ENCODE measurements at regions of chrX and their contacts with region 1.

Region 1: DNA sequence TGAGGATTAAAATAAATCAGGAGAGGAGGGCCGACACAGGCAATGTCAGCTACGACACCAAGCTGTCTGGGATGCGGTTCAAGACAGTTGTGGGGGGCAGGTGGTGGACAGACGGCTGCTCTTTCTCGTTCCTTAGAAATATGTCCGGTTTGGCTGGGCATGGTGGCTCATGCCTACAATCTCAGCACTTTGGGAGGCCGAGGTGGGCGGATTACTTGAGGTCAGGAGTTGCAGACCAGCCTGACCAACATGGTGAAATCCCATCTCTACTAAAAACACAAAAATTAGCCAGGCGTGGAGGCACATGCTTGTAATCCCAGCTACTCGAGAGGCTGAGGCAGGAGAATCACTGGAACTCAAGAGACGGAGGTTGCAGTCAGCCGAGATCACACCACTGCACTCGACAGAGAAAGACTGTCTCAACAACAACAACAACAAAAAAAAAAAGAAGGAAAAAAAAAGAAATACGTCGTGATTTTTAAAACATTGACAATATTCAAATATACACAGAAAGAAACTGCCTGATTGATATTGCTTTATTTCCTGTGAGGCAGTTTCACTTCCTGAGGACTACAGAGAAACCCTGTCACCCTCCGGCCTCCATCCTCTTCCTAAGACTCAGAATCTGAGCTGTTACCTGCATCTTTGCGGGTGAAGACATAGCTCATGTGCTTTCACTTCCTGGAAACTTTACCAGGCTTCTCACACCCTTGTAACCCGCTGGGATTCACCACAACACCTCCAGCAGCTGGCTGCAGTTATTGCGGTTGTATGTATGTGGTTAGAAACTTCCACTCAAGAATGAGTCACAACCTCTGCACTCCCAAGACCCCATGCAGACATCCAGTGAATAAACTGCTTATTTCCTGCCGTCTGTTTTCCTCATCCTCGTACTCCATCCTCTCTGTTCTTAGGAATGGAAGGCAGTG is 63.8 kb upstream of the STS start:
- DNase-seq: peak in 12 of 14 experiments; percentile 14 to 81 (median 50)
- ATAC-seq: peak; percentile 91
- H3K4me3 ChIP-seq: no peak overlapping the region
- H3K4me3 Mint-ChIP-seq: peak overlapping the region; percentile 72
- H3K27ac ChIP-seq: peak overlapping the region in 1 of 2 donors; percentile 46
- H3K27ac Mint-ChIP-seq: peak overlapping the region; percentile 77
- H3K4me1 ChIP-seq: peaks cover 33% of the 10 kb centered on the region
- H3K4me1 Mint-ChIP-seq: peaks cover 56% of the 10 kb centered on the region
- H3K27me3 ChIP-seq: no peaks in the 10 kb centered on the region
- H3K27me3 Mint-ChIP-seq: no peaks in the 10 kb centered on the region
- CTCF ChIP-seq: no peak

Region 2: DNA sequence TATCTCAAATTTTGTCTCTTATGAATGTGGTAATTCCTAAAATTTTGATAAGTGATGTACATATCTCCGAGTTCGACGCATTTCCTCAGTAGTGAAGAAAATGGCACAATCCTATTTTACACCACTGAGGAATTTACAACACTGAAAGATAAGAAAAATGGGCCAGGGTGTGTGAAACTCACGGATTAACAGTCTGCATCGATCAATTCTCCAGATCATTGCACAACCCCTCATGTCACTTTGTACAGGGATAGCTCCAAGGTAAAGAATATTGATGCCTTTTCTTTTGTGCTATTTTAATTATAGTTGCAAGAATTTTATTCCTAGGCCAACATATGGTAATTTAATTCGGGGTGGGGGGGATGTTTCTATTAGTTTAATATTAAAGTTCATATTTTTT is 280.1 kb before region 1 on chrX:
- CTCF ChIA-PET with region 1: no interaction called
- POLR2A ChIA-PET with region 1: no interaction called
- intact Hi-C with region 1: loop called in 1 of 2 experiments (anchors 5 kb)
- DNase-seq: no peak
- ATAC-seq: no peak
- H3K4me3 ChIP-seq: no peak overlapping the region
- H3K4me3 Mint-ChIP-seq: no peak overlapping the region
- H3K27ac ChIP-seq: no peak overlapping the region
- H3K27ac Mint-ChIP-seq: no peak overlapping the region
- H3K4me1 ChIP-seq: no peaks in the 10 kb centered on the region
- H3K4me1 Mint-ChIP-seq: no peaks in the 10 kb centered on the region
- H3K27me3 ChIP-seq: no peaks in the 10 kb centered on the region
- H3K27me3 Mint-ChIP-seq: no peaks in the 10 kb centered on the region
- CTCF ChIP-seq: no peak